ENCODE measurements at regions of chr7 and their contacts with region 1.

Region 1: DNA sequence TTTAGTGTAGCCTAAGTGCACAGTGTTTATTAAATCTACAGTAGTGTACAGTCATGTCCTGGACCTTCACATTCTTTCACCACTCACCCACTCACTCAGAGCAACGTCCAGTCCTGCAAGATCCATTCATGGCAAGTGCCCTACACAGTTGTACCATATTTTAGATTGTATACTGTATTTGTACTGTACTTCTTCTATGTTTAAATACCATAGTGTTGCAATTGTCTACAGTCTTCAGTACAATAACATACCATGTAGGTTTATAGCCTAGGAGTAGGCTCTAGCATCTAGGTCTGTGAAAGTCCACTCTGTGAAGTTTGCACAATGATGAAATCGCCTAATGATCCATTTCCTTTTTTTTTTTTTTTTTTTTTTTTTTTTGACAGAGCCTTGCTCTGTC is 12.0 kb downstream of the EEPD1 start:
- DNase-seq: no peak
- ATAC-seq: peak in 1 of 8 donors; percentile 27
- H3K4me3 ChIP-seq: no peak overlapping the region
- H3K27ac ChIP-seq: no peak overlapping the region
- H3K4me1 ChIP-seq: peaks cover 0 to 34% (median 10%) of the 10 kb centered on the region in 9 donors
- H3K27me3 ChIP-seq: no peaks in the 10 kb centered on the region
- CTCF ChIP-seq: no peak

Region 2: GRCh38 chr7:34845666-34846361 is 1319.2 kb before region 1 on chr7:
- intact Hi-C with region 1: no loop called
- DNase-seq: no peak
- ATAC-seq: no peak
- H3K4me3 ChIP-seq: no peak overlapping the region
- H3K27ac ChIP-seq: no peak overlapping the region
- H3K4me1 ChIP-seq: no peaks in the 10 kb centered on the region
- H3K27me3 ChIP-seq: peaks cover 0 to 4% (median 0%) of the 10 kb centered on the region in 7 donors
- CTCF ChIP-seq: no peak

Region 3: DNA sequence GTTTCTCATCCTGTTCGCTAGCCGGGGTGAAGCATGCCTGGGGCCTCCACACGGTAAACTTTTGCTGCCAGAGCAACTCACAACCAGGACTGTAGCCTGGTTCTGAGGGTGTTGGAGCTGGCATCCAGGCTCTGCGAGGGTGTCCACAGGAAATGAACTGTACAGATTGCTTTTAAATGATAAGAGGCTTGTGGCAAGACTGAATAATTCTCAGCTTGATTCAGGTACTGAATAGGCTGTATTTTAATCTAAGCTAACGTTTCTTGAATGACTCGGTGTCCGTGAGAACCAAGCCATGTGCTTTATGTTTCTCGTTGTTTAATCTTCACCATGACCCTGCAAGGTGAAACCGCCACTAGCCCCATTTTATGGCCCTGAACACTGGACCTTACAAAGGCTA is 37.3 kb after region 1 on chr7:
- intact Hi-C with region 1: loop called in 1 of 10 experiments (anchors 5 kb)
- DNase-seq: no peak
- ATAC-seq: peak in 6 of 8 donors; percentile 11 to 34 (median 24)
- H3K4me3 ChIP-seq: no peak overlapping the region
- H3K27ac ChIP-seq: peak overlapping the region in 5 of 10 donors; percentile 3 to 60 (median 25)
- H3K4me1 ChIP-seq: peaks cover 0 to 75% (median 46%) of the 10 kb centered on the region in 9 donors
- H3K27me3 ChIP-seq: no peaks in the 10 kb centered on the region
- CTCF ChIP-seq: no peak

Region 4: GRCh38 chr7:36291387-36292316 is 126.6 kb after region 1 on chr7:
- intact Hi-C with region 1: no loop called
- DNase-seq: peak; percentile 87 to 88
- ATAC-seq: peak; percentile 92 to 96 (median 94)
- H3K4me3 ChIP-seq: peak overlapping the region; percentile 12 to 49 (median 47)
- H3K27ac ChIP-seq: peak overlapping the region; percentile 21 to 92 (median 80)
- H3K4me1 ChIP-seq: peaks cover 0 to 52% (median 28%) of the 10 kb centered on the region in 9 donors
- H3K27me3 ChIP-seq: no peaks in the 10 kb centered on the region
- CTCF ChIP-seq: peak; percentile 96 to 99 (median 98)